ENCODE measurements at regions of chr1 and their contacts with region 1.

Region 1: GRCh38 chr1:24586970-24587820 is 31.3 kb downstream of the NCMAP start:
- DNase-seq: peak; percentile 39
- H3K4me3 ChIP-seq: no peak overlapping the region
- H3K27ac ChIP-seq: no peak overlapping the region
- H3K4me1 ChIP-seq: no peaks in the 10 kb centered on the region
- H3K27me3 ChIP-seq: peaks cover 0 to 6% of the 10 kb centered on the region in 2 experiments
- CTCF ChIP-seq: peak; percentile 74 to 78
- POLR2A ChIP-seq: no peak

Region 2: DNA sequence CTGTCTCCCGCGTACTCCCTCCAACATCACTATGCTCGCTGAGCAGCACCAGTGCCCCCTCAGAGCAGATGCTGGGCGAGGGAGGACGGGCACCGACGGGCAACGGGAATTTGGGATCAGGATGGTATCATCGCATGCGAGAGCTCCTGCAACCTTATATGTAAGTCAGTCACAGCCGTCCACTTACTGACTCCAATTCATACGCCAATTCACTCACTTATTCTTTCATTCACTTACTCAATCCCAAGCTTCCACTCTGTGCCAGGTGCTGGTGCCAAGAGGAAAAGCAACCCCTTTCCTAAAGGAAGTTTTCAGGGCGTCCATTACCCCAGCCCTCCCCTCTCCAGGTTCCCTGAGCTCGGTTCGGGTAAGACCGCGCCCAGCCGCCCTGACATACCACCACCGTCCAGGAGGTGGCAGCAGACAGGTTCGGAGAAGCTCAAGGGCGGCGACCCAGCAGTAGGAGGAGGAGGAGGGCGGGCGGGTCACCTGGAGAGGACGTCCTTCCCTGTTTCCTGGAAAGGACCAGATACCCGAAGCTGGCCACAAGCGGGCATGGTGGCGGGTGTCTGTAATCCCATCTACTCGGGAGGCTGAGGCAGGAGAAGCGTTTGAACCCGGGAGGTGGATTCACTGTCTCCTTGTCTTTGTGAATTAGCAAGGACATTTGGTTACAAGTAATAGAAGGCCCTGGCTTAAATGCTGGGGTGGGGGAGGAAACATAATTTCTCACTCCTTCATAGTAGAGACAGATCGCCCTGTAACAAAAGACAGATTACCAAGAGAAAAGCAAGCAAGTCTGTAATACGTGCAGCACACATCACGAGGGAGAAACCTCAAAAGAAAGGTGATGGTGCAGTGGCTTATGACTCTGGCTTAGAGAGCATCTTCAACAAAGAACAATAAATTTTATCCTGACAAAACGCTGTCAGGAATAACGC is 436.7 kb before region 1 on chr1:
- CTCF ChIA-PET with region 1: interaction called, 16 read pairs
- POLR2A ChIA-PET with region 1: no interaction called
- dilution Hi-C with region 1: no loop called
- intact Hi-C with region 1: loop called (anchors 5 kb)
- DNase-seq: peak; percentile 83
- H3K4me3 ChIP-seq: peak overlapping the region in 1 of 3 experiments; percentile 19
- H3K27ac ChIP-seq: no peak overlapping the region
- H3K4me1 ChIP-seq: peaks cover 11% of the 10 kb centered on the region
- H3K27me3 ChIP-seq: peaks cover 11% of the 10 kb centered on the region in 2 experiments
- CTCF ChIP-seq: peak; percentile 79 to 94
- POLR2A ChIP-seq: no peak

Region 3: DNA sequence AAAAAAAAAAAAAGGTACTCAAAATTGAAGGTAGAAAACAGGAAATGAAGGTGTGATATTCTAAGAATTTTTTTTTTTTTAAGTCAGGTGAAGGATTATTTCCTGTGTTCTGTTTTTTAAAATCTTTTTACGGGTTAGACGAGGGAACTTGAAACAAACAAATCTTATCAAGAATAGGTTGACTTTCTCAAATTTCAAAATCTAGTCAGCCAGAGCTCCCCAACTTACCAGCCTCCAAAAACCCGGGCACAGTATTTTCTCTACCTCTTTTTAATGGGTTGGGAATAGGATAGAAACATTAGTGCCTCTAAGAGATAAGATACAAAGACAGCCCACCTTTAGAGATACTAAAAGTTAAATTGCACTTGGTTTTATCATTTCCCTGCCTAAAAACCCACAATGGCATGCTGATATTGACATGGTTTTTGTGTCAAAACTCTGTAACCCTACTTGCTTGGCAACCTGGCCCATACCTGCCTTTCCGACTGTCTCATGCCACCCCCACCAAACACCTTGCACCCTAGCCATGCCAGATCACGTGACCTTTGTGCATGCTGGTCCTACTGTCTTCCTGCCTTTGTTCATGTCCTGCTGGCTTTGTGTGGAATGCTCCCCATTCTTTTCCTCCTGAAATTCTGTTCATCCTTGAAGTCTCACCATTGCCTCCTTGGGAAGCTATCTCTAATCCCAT is 80.4 kb before region 1 on chr1:
- CTCF ChIA-PET with region 1: no interaction called
- POLR2A ChIA-PET with region 1: no interaction called
- dilution Hi-C with region 1: no loop called
- intact Hi-C with region 1: no loop called
- DNase-seq: no peak
- H3K4me3 ChIP-seq: no peak overlapping the region
- H3K27ac ChIP-seq: no peak overlapping the region
- H3K4me1 ChIP-seq: peaks cover 5% of the 10 kb centered on the region
- H3K27me3 ChIP-seq: peaks cover 4 to 9% of the 10 kb centered on the region in 2 experiments
- CTCF ChIP-seq: no peak
- POLR2A ChIP-seq: no peak

Region 4: GRCh38 chr1:24541711-24542346 is 45.4 kb before region 1 on chr1:
- CTCF ChIA-PET with region 1: interaction called, 21 read pairs
- POLR2A ChIA-PET with region 1: no interaction called
- dilution Hi-C with region 1: no loop called
- intact Hi-C with region 1: no loop called
- DNase-seq: no peak
- H3K4me3 ChIP-seq: no peak overlapping the region
- H3K27ac ChIP-seq: no peak overlapping the region
- H3K4me1 ChIP-seq: peaks cover 3% of the 10 kb centered on the region
- H3K27me3 ChIP-seq: peaks cover 0 to 2% of the 10 kb centered on the region in 2 experiments
- CTCF ChIP-seq: peak; percentile 46 to 47
- POLR2A ChIP-seq: no peak

Region 5: GRCh38 chr1:24575915-24576587 is 11.1 kb before region 1 on chr1:
- CTCF ChIA-PET with region 1: interaction called, 12 read pairs
- POLR2A ChIA-PET with region 1: interaction called, 5 read pairs
- dilution Hi-C with region 1: no loop called
- intact Hi-C with region 1: no loop called
- DNase-seq: no peak
- H3K4me3 ChIP-seq: no peak overlapping the region
- H3K27ac ChIP-seq: no peak overlapping the region
- H3K4me1 ChIP-seq: no peaks in the 10 kb centered on the region
- H3K27me3 ChIP-seq: peaks cover 0 to 2% of the 10 kb centered on the region in 2 experiments
- CTCF ChIP-seq: no peak
- POLR2A ChIP-seq: no peak

Region 6: GRCh38 chr1:25239681-25240541 is 652.7 kb after region 1 on chr1:
- CTCF ChIA-PET with region 1: no interaction called
- POLR2A ChIA-PET with region 1: no interaction called
- dilution Hi-C with region 1: no loop called
- intact Hi-C with region 1: no loop called
- DNase-seq: peak; percentile 91
- H3K4me3 ChIP-seq: peak overlapping the region; percentile 5 to 43 (median 29)
- H3K27ac ChIP-seq: peak overlapping the region; percentile 36
- H3K4me1 ChIP-seq: peaks cover 19% of the 10 kb centered on the region
- H3K27me3 ChIP-seq: no peaks in the 10 kb centered on the region
- CTCF ChIP-seq: peak; percentile 62 to 76
- POLR2A ChIP-seq: peak; percentile 89

Measured in endothelial cell of umbilical vein (primary cell).